A673 (cell line): ENCODE measurements at regions of chr10 and their contacts with region 1.

Region 1: GRCh38 chr10:13414894-13415293 is 66.8 kb upstream of the SEPHS1 start:
- DNase-seq: peak; percentile 32
- H3K4me3 ChIP-seq: no peak overlapping the region
- H3K27ac ChIP-seq: no peak overlapping the region
- H3K4me1 ChIP-seq: no peaks in the 10 kb centered on the region
- H3K27me3 ChIP-seq: no peaks in the 10 kb centered on the region
- CTCF ChIP-seq: peak; percentile 57

Region 2: DNA sequence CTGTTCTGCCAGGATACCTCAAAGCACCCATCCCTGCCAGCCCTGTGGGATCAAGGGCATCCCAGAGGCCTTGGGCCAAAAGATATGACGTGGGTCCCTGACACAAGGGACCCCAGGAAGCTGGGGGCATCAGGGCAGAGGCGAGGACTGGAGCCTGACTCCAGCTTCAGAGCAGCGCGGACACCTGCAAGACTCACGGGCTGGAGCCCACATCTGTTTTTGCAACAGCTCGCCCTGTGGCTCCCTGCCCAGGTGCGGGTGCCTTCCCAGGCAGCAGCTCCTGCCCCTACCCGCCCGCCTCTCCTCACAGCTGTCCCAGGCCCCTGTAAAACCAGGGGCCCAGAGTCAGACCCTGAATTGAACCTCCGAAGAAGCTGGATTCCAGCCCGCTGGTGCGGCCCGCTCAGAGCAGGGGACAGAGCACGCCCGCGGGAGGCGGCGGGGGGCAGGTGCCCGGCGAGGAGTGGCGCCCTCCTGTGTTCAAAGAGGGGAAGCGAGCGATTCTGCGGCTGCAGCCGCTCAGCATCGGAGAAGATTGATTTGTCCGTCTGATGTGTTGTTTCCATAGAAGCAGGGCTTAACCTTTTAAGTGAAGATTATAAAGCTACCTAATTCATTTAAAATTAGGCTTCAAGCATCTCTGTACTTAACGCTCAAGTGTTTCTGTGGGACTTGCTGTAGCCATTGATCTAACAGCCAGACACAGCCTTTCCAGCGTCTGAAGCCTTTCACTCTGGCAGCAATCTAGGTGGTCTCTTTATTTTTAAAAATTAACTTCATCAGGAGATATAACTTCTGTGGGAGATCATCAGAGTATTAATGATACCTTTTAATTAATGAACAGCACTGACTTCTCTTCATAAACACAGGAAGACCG is 25.5 kb after region 1 on chr10:
- CTCF ChIA-PET with region 1: interaction called, 17 read pairs
- POLR2A ChIA-PET with region 1: no interaction called
- intact Hi-C with region 1: no loop called
- DNase-seq: peak; percentile 69
- H3K4me3 ChIP-seq: peak overlapping the region; percentile 45
- H3K27ac ChIP-seq: no peak overlapping the region
- H3K4me1 ChIP-seq: peaks cover 9% of the 10 kb centered on the region
- H3K27me3 ChIP-seq: peaks cover 16% of the 10 kb centered on the region
- CTCF ChIP-seq: peak; percentile 94

Region 3: DNA sequence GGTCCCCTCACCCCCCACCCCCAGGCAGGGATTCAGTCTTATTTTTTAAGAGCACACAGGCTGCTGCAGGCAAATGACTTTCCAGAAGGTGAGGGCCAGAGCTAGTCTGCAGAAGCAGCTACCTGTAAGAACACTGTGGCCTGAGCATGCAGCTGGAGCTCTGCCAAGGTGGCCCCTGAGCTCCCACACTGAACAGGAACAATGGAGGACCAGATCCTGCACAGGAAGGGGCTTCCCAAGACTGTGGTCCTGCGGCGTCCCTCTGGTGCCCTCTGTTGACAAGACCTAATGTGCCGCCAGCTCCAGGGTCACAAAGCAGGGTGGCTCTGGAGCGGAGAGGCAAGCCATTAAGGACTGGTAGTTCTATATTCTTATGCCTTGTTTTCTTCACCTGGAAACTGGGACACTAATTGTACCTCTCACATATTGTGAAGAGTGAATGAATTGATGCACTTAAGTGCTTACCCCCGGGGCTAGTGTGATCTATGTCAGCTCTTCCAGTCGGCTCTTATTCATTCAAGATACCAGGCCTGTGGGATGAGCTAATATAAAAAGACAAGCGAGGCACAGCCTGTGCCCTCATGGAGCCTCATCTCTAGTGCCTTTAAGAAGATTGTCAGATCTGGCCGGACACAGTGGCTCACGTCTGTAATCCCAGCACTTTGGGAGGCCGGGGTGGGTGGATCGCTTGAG is 121.9 kb after region 1 on chr10:
- CTCF ChIA-PET with region 1: interaction called, 5 read pairs
- POLR2A ChIA-PET with region 1: no interaction called
- intact Hi-C with region 1: loop called (anchors 10 kb)
- DNase-seq: peak; percentile 77
- H3K4me3 ChIP-seq: no peak overlapping the region
- H3K27ac ChIP-seq: no peak overlapping the region
- H3K4me1 ChIP-seq: no peaks in the 10 kb centered on the region
- H3K27me3 ChIP-seq: peaks cover 19% of the 10 kb centered on the region
- CTCF ChIP-seq: peak; percentile 80